ENCODE measurements at regions of chr9 and their contacts with region 1.

Region 1: GRCh38 chr9:26892251-26893029 is at the start of gene CAAP1:
- DNase-seq: peak; percentile 90 to 95 (median 92)
- H3K4me3 ChIP-seq: peak within 1 kb of the TSS; percentile 48 to 100 (median 93)
- H3K27ac ChIP-seq: peak within 1 kb of the TSS; percentile 84 to 99 (median 93)
- H3K27me3 ChIP-seq: no peaks in the 10 kb centered on the region
- CTCF ChIP-seq: peak in 44 of 56 donors; percentile 5 to 54 (median 28)
- total RNA-seq, gene CAAP1: 6.6 to 18.7 (median 10.8) TPM

Region 2: DNA sequence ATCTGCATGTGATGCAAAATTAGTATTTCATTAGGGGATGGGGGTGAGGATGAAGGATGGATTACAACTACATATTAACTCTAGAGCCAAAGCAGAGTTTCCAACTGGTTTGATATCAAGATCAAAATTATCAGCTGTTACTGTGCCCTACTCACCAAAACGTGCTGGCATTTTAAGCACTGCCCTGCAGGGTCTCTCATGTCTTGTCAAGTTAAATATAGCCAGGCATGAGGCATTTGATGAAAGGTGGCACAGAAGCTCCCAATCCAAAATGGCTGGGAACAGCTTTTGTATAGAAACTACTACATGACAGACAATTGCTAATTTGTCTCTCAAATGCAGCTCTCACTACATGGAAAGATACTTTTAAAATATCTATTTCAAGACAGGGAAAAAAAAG is 27.3 kb after region 1 on chr9:
- intact Hi-C with region 1: no loop called
- DNase-seq: no peak
- H3K4me3 ChIP-seq: no peak overlapping the region
- H3K27ac ChIP-seq: no peak overlapping the region
- H3K27me3 ChIP-seq: no peaks in the 10 kb centered on the region
- CTCF ChIP-seq: no peak

Region 3: DNA sequence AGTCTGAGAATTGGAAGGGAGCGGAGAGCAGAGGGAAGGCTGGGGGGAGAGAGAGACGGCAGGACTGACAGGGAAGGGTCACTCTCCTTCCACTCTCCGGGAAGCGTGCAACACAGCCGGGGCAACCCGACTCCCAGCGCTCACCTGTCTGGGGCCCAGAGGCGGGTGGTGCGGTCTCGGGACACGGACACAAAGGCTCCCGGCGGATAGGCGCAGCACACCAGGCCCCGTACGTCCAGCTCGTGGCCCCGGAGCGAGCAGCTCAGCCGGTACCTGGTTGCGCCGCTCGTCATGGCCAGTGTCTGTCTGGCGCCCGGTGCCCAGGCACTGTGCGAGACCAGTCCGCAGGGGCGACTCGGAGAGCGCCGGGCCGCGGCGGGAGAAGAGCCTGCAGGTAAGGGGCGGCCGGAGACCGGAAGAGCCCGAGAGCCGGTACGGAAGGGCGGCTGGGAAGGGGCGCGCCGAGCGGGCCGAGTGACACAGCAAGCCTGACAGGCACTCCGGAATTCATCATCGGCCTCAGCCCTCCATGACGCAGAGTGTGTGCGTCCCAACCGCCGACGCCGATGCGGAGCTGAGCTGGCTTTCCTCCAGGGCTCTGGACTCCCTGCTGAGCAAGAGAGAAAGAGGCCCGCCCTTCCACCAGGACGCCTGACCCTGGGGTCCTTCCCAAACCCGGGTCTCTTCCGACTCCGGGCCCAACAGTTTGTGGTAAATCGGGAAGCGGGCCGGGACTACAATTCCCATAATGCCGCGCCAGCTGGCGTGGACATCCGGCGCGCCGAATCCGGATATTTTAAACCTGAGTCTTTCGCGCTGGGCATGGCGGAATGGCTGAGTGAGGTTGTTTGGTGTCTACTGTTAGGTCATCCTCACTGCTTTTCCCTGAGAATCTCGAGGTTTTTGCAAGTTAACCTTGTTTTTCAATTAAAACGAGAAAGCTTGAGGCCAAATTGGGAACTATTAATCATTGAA is 54.6 kb after region 1 on chr9 and contains the start of gene PLAA:
- intact Hi-C with region 1: loop called (anchors 2 kb)
- DNase-seq: peak; percentile 83 to 91 (median 88)
- H3K4me3 ChIP-seq: peak within 1 kb of the TSS; percentile 61 to 100 (median 97)
- H3K27ac ChIP-seq: peak within 1 kb of the TSS; percentile 79 to 100 (median 98)
- H3K27me3 ChIP-seq: no peaks in the 10 kb centered on the region
- CTCF ChIP-seq: peak in 17 of 56 donors; percentile 3 to 35 (median 18)
- total RNA-seq, gene PLAA: 16.3 to 40.7 (median 27.7) TPM